ENCODE measurements at regions of chr9 and their contacts with region 1.

Region 1: DNA sequence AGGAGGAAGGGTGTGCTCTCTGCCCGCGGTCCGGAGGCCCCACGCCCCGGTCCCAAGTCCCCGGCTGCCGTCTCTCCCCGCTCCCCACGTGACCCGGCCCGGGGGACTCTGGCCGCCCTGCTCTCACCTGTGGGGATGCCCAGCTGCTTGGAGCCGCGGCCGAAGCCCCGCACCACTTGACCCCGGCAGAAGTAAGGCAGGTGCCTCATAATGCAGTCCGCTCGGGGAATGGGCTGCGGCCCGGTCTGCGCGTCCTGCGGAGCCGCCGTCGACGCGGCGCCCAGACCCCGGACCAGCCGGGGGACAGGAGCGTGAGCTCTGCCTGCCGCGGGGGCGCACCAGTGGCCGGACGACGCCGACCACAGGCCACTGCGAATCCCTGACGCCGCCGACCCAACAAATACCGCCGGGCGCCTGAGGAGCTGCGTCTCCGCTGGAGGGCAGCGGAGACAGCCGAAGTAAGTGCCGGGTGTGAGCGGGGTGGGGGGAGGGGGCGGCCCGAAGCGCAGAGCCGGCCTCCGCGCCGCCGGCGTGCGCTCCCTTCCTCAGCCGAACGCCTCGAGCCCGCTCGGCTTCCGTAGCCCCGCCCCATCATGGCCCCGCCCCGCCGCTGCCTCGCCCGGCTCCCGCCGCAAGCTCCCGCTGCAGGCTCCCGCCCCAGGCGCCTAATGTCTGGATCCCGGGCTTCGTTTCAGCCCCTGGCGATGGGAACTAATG is at the start of gene RFK:
- DNase-seq: peak; percentile 63
- H3K4me3 ChIP-seq: peak within 1 kb of the TSS; percentile 98
- H3K27me3 ChIP-seq: no peaks in the 10 kb centered on the region
- CTCF ChIP-seq: peak; percentile 40
- polyA plus RNA-seq, gene RFK: 7.5 and 15.4 TPM in 2 replicates

Region 2: GRCh38 chr9:76269818-76270217 is 124.3 kb before region 1 on chr9:
- CTCF ChIA-PET with region 1: no interaction called
- POLR2A ChIA-PET with region 1: no interaction called
- DNase-seq: peak; percentile 13
- H3K4me3 ChIP-seq: no peak overlapping the region
- H3K27me3 ChIP-seq: no peaks in the 10 kb centered on the region
- CTCF ChIP-seq: no peak

Region 3: DNA sequence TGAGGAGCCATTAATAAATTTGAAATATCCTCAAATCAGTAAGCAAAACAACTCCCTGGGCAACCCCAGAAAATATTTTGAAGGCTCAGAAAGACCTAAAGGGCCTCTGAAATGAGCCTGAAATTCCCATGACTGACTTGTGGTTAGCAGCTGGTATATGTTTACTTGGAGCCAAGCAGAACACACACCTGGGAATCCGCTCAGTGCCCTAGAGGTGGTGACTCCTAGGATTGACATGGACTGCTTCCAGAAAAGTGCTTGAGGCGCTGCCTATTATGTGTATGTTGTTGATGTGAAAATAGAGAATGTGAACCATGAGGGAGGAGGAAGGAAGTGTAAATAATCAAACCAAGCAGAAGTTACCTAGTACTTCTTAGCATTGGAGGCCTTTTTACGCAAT is 14.6 kb before region 1 on chr9:
- CTCF ChIA-PET with region 1: interaction called, 13 read pairs
- POLR2A ChIA-PET with region 1: interaction called, 3 read pairs
- DNase-seq: no peak
- H3K4me3 ChIP-seq: no peak overlapping the region
- H3K27me3 ChIP-seq: no peaks in the 10 kb centered on the region
- CTCF ChIP-seq: no peak

Measured in BJ (cell line).